Activated T-helper 2 cell treated with anti-CD3 and anti-CD28 coated beads, Interferon-gamma antibody, Interleukin-2, Interleukin-4, amounts not matched to agents 10 μg/mL and 5 μg/mL and 100 μg/mL, durations not matched to agents 14 hours and 24 hours and 36 hours (primary cell): ENCODE measurements at regions of chr4 and their contacts with region 1.

Region 1: DNA sequence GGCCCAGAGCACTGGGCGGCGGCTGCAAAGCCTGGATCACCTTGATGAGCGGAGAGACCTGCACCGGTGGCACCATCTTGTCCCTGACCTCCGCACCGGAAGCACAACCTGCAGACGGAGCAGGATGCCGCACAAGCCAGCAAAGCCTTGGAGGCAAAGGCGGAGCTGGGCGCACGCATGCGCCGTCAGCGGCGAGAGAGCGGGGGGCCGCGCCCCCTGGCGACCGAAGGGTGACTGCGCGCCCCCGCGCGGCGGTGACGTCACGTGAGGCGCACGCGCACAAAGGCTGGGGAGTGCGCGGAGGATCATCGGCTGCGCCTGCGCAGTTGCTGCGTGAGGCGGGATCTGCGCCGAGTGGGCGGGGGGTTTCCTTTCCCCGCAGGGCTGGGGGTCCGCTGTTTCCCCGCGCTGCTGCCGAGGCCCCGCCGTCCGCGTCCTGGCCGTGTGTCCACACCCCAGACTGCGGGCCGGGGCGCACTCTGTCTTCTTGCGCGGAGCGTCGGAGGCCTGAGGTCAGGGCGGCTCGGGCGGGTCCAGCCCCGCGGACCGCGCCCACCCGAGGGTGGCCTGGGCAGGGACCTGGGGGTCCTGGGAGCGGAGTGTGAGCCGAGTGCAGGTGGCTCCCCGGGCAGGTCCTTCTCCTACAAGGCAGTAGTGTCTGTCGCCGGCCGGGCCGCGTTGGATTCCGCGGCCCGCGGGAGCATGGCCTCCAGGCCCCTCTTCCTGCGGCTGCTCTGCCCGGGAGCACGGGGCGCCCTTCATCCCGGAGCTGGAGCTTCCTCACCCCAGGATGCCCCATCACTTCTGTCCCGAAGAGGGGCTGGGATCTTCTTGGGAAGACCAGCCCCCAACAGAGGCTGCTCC is at the starts of genes ATP5ME and MYL5:
- DNase-seq: peak; percentile 97
- H3K4me3 Mint-ChIP-seq: peak within 1 kb of the TSS; percentile 86
- H3K27ac Mint-ChIP-seq: peak within 1 kb of the TSS; percentile 85
- H3K4me1 Mint-ChIP-seq: peaks cover 7% of the 10 kb centered on the region
- H3K27me3 Mint-ChIP-seq: no peaks in the 10 kb centered on the region
- total RNA-seq, gene ATP5ME: 208 and 235 TPM in 2 replicates
- total RNA-seq, gene MYL5: 27.7 and 29.8 TPM in 2 replicates

Region 2: GRCh38 chr4:242121-242848 is 432.1 kb before region 1 on chr4:
- intact Hi-C with region 1: loop called (anchors 5 kb)
- DNase-seq: peak; percentile 61
- H3K4me3 Mint-ChIP-seq: peak overlapping the region; percentile 75
- H3K27ac Mint-ChIP-seq: peak overlapping the region; percentile 56
- H3K4me1 Mint-ChIP-seq: peaks cover 10% of the 10 kb centered on the region
- H3K27me3 Mint-ChIP-seq: no peaks in the 10 kb centered on the region

Region 3: DNA sequence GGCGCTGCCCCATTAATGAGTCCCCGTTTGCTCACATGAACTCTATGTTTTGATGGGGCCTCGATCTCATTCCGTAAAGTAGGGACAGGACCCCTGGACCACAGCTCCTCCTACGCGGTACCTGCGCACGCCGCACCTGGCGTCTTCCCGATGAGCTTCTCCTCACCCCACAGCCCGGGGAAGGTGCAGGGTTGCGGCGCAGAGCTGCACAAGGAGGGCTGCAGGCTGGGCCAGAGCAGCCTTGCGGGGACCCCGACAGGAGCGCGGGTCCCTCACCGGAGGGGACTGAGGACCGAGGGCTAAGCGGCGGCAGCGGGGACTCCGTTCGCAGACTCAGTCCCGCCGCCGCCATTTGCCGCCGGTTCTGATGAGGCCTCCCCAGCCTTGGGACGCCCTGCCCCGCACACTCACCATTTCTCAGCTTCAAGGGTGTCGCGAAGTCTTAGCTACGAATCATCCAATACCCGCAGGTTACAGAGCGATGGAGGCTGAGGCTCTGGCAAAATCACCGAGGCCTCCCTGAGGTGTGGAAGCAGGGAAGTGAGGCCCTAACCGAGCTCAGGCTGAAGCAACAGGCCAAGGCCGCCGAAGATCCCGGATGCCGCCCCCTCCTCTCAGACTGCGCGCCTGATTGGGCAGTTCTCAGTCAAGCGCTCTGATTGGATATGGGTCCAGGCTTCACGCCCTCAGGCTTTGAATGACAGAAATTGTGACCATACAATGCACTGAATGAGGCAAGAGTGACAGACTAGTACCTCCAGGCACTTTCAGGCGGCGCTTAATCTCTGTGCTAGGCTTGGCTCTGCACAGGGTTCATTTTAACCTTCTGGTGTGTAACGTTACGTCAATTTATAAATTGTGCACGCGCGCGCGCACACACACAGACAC is 200.6 kb before region 1 on chr4:
- intact Hi-C with region 1: loop called (anchors 10 kb)
- DNase-seq: peak; percentile 94
- H3K4me3 Mint-ChIP-seq: peak overlapping the region; percentile 94
- H3K27ac Mint-ChIP-seq: peak overlapping the region; percentile 97
- H3K4me1 Mint-ChIP-seq: peaks cover 32% of the 10 kb centered on the region
- H3K27me3 Mint-ChIP-seq: no peaks in the 10 kb centered on the region

Region 4: DNA sequence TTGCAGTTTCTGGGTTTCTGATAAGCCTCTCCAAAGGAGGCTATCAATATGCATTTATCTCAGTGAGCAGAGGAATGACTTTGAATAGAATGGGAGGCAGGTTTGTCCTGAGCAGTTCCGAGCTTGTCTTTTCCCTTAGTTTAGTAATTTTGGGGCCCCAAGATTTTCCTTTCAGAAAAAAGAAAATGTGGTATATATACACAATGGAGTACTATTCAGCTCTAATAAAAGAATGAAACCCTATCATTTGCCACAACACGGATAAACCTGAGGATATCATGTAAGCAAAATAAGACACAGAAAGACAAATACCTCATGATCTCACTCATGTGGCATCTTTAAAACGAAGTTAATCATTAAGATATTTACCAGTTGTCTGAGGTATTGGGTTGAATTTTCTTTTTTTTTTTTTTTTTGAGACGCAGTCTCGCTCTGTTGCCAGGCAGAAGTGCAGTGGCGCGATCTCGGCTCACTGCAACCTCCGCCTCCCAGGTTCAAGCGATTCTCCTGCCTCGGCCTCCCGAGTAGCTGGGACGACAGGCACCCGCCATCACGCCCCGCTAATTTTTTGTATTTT is 176.0 kb before region 1 on chr4:
- intact Hi-C with region 1: loop called (anchors 5 kb)
- DNase-seq: no peak
- H3K4me3 Mint-ChIP-seq: peak overlapping the region; percentile 98
- H3K27ac Mint-ChIP-seq: peak overlapping the region; percentile 97
- H3K4me1 Mint-ChIP-seq: peaks cover 27% of the 10 kb centered on the region
- H3K27me3 Mint-ChIP-seq: no peaks in the 10 kb centered on the region

Region 5: GRCh38 chr4:602559-602942 is 71.9 kb before region 1 on chr4:
- intact Hi-C with region 1: loop called (anchors 5 kb)
- DNase-seq: peak; percentile 31
- H3K4me3 Mint-ChIP-seq: no peak overlapping the region
- H3K27ac Mint-ChIP-seq: no peak overlapping the region
- H3K4me1 Mint-ChIP-seq: peaks cover 9% of the 10 kb centered on the region
- H3K27me3 Mint-ChIP-seq: no peaks in the 10 kb centered on the region

Region 6: DNA sequence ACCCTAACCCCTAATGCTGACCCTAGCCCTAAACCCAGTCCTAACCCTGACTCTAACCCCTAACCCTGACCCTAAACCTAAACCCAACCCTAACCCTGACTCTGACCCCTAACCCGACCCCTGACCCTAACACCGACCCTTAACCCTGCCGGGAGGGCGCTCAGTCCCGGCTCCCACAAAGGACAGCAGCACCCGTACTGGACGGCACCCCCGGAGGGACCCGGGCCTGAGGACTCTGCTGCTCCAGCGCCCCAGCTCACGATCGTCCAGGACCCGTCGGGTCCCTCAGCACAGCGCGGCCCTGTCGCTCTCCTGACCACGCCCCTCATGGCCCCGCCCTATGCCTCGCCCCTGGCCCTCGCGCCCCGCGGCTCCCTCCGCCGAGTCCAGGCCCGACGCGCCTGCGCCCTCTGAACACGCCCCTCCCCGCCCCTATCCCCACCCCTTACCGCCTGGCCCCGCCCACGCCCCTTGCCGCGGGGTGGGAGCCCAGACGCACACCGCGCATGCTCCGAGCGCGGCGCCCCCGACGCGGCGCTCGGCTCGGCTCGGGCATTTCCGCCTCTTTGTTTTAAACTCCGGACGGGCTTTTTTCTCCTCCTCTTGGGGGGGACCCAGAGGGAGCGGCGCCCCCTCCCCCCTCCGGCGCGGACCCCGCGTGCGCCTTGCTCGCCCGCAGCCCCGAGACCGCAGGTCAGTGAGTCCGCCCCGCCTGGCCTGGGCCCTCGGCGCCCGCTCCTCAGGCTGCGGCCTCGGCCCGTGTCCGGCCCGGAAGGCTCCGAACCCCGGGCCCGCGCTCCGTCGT is 31.1 kb after region 1 on chr4 and contains the start of gene PCGF3:
- intact Hi-C with region 1: loop called (anchors 2 kb)
- DNase-seq: peak; percentile 94
- H3K4me3 Mint-ChIP-seq: peak within 1 kb of the TSS; percentile 74
- H3K27ac Mint-ChIP-seq: peak within 1 kb of the TSS; percentile 52
- H3K4me1 Mint-ChIP-seq: peaks cover 16% of the 10 kb centered on the region
- H3K27me3 Mint-ChIP-seq: no peaks in the 10 kb centered on the region
- total RNA-seq, gene PCGF3: 35.0 and 39.2 TPM in 2 replicates

Region 7: GRCh38 chr4:749698-750666 is 75.6 kb after region 1 on chr4:
- intact Hi-C with region 1: no loop called
- DNase-seq: no peak
- H3K4me3 Mint-ChIP-seq: no peak overlapping the region
- H3K27ac Mint-ChIP-seq: no peak overlapping the region
- H3K4me1 Mint-ChIP-seq: no peaks in the 10 kb centered on the region
- H3K27me3 Mint-ChIP-seq: no peaks in the 10 kb centered on the region